Activated B cell treated with CpG ODN at 0.5 μM for 24 hours (primary cell): ENCODE measurements at regions of chr3 and their contacts with region 1.

Region 1: GRCh38 chr3:183680061-183680460 is 17.5 kb upstream of the YEATS2 start:
- DNase-seq: no peak
- ATAC-seq: no peak
- H3K4me3 Mint-ChIP-seq: no peak overlapping the region
- H3K27ac Mint-ChIP-seq: no peak overlapping the region
- H3K4me1 Mint-ChIP-seq: no peaks in the 10 kb centered on the region
- H3K27me3 Mint-ChIP-seq: no peaks in the 10 kb centered on the region
- CTCF ChIP-seq: no peak

Region 2: DNA sequence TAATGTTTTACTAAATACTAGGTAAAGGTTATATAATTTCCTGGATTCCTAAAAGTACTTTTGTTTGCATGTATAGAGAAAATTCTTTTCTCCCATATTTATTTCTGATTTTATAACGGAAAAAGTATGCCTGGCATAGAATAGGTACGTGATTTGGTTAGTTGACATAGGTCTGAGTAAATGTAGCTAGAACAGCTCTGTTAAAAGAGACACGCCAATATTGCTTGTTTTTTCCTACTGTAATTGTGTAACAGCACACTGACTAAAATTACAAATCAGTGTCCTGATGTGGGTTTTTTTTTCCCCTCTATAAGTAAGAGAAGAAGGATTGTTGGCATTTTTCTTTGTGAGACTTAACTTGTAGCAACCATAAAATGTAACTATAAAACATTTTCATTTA is 18.0 kb before region 1 on chr3:
- CTCF ChIA-PET with region 1: no interaction called
- POLR2A ChIA-PET with region 1: no interaction called
- intact Hi-C with region 1: loop called (anchors 2 kb)
- DNase-seq: no peak
- ATAC-seq: no peak
- H3K4me3 Mint-ChIP-seq: no peak overlapping the region
- H3K27ac Mint-ChIP-seq: no peak overlapping the region
- H3K4me1 Mint-ChIP-seq: peaks cover 4% of the 10 kb centered on the region
- H3K27me3 Mint-ChIP-seq: no peaks in the 10 kb centered on the region
- CTCF ChIP-seq: no peak